ENCODE measurements at regions of chr5 and their contacts with region 1.

Region 1: GRCh38 chr5:39714036-39714698 is 289.4 kb upstream of the DAB2 start:
- DNase-seq: peak; percentile 66
- H3K4me3 Mint-ChIP-seq: no peak overlapping the region
- H3K27ac Mint-ChIP-seq: no peak overlapping the region
- H3K4me1 Mint-ChIP-seq: no peaks in the 10 kb centered on the region
- H3K27me3 Mint-ChIP-seq: no peaks in the 10 kb centered on the region

Region 2: DNA sequence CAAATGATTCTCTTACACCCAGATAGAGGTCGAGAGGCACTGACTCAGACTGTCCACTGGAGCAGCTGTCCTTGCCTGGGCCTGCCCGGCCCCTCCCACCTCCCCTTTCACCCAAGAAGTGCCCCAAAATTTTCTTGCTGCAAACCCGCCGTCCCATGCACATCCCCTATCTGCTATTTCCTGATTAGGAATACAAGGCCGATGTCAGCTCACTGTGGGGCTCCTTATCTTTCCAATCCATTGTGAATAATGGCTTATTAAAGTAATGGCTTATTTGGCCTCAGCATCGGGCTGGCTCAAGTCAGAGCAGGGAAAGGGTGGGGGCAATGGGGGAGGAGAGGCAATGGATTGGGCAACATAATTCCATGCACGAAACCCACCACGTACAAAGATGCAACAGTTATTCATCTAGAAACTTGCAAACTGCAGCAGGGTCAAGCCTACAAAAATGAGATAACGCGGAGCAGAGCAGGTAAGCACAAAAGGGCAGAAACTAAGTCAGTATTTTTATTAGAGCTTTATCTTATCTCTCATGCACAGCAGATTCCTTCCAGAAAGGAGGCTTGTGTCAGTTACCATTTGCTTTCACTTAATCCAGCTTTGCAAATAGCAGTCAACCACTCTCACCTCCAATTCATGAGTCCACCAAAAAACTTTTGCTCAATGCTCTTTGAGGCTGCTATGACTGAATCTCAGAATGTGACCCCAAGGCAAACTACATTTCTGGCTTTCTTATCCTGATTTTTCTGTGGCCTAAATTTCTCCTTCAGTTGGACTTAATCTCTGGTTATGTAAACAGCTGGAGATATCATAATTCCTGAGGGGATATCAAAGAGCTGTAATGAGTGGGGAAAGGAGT is 1006.6 kb before region 1 on chr5:
- CTCF ChIA-PET with region 1: no interaction called
- intact Hi-C with region 1: no loop called
- DNase-seq: no peak
- H3K4me3 Mint-ChIP-seq: no peak overlapping the region
- H3K27ac Mint-ChIP-seq: no peak overlapping the region
- H3K4me1 Mint-ChIP-seq: no peaks in the 10 kb centered on the region
- H3K27me3 Mint-ChIP-seq: peaks cover 2% of the 10 kb centered on the region

Region 3: DNA sequence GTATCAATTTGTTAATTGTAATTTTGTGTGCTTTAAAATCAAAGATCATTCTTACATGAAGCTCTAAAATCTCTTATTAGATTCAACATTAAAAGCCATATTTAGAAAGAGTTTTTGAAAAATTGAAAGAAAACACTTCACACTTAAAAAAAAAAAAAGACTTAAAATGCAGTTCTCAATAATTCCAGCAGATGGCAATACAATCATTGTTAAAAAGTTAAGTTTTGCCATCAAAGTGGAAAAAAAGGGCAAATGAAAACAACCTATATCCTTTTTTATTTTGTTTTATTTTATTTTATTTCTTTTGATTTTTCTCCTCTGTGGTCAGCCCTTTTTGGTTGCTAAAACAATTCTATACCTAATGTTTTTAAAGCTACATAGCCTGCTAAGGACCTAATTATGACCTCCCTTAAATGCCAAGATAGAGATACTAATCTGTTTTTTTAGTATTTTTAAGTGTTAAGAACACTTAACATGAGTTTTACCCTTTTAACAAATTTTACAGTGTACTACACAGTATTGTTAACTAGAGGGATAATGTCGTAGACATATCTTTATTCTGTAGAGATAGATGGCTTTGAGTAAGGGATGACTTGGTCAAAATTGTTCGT is 135.2 kb before region 1 on chr5:
- CTCF ChIA-PET with region 1: interaction called, 6 read pairs
- intact Hi-C with region 1: loop called (anchors 2 kb)
- DNase-seq: no peak
- H3K4me3 Mint-ChIP-seq: no peak overlapping the region
- H3K27ac Mint-ChIP-seq: no peak overlapping the region
- H3K4me1 Mint-ChIP-seq: peaks cover 8% of the 10 kb centered on the region
- H3K27me3 Mint-ChIP-seq: no peaks in the 10 kb centered on the region

Region 4: GRCh38 chr5:39599721-39600431 is 114.3 kb before region 1 on chr5:
- CTCF ChIA-PET with region 1: interaction called, 4 read pairs
- intact Hi-C with region 1: loop called (anchors 5 kb)
- DNase-seq: no peak
- H3K4me3 Mint-ChIP-seq: no peak overlapping the region
- H3K27ac Mint-ChIP-seq: no peak overlapping the region
- H3K4me1 Mint-ChIP-seq: no peaks in the 10 kb centered on the region
- H3K27me3 Mint-ChIP-seq: peaks cover 11% of the 10 kb centered on the region

Region 5: DNA sequence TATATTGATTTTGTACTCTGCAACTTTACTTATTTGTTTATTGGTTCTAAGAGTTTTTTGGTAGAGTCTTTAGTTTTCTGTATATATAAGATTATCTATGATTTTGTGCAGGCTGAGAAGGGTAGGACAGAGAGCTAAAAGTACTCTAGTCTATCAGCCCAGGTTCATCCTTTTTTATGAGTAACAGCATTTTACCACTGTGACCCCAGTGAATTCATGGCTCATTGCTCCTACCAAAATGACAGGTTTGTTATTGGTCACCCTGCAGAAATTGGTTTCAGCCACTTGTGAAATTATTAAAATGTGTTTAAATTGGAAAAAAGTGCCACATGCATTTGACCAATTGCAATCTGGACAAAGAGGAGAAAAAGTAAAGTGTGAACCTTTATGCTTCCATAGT is 132.0 kb after region 1 on chr5:
- CTCF ChIA-PET with region 1: no interaction called
- intact Hi-C with region 1: no loop called
- DNase-seq: no peak
- H3K4me3 Mint-ChIP-seq: no peak overlapping the region
- H3K27ac Mint-ChIP-seq: no peak overlapping the region
- H3K4me1 Mint-ChIP-seq: no peaks in the 10 kb centered on the region
- H3K27me3 Mint-ChIP-seq: peaks cover 23% of the 10 kb centered on the region

Region 6: GRCh38 chr5:40165794-40166728 is 451.9 kb after region 1 on chr5:
- CTCF ChIA-PET with region 1: no interaction called
- intact Hi-C with region 1: loop called (anchors 10 kb)
- DNase-seq: peak; percentile 61
- H3K4me3 Mint-ChIP-seq: no peak overlapping the region
- H3K27ac Mint-ChIP-seq: peak overlapping the region; percentile 14
- H3K4me1 Mint-ChIP-seq: peaks cover 9% of the 10 kb centered on the region
- H3K27me3 Mint-ChIP-seq: no peaks in the 10 kb centered on the region

Region 7: DNA sequence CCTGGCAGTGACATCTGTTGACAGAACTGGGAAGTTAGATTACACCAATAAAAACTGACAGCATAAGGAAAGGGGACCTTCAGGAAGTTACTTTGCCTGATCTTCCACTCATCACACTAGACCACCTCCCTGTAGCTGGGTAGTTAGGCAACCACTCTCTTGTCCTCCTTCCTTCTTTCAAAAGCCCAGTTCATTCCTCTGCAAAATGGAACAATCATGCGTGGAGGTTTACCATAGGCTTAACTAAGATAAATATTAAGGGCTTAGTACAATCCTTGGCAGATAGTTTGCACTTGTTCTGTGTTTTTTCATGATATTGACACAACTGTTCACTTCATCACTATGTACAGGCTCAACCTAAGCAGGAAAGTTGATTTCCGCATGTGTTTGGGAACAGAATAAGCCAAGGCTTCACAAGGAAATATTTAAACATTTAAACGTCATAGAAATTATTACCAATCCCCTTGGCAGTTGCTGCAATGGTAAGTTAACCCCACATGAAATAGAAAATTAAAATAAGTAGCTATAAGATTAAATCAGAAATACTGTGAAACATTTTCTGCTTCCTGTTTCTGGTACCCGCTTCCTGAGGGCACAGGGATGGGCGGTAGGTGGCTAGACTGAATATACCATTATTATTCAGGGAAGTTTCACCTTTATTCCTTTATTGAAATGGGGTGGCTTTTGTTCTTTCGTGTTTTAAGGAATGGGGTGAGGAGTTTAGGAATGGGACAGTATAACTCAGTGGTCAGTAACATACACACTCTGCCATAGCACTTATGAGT is 955.6 kb after region 1 on chr5:
- CTCF ChIA-PET with region 1: no interaction called
- intact Hi-C with region 1: no loop called
- DNase-seq: no peak
- H3K4me3 Mint-ChIP-seq: no peak overlapping the region
- H3K27ac Mint-ChIP-seq: no peak overlapping the region
- H3K4me1 Mint-ChIP-seq: peaks cover 59% of the 10 kb centered on the region
- H3K27me3 Mint-ChIP-seq: no peaks in the 10 kb centered on the region